Ascending aorta (tissue), 2 donors: ENCODE measurements at regions of chr4 and their contacts with region 1.

Region 1: GRCh38 chr4:53377319-53378170 is at the start of gene FIP1L1:
- DNase-seq: peak; percentile 78 to 97
- H3K4me3 ChIP-seq: peak within 1 kb of the TSS; percentile 66 to 78
- H3K27ac ChIP-seq: peak within 1 kb of the TSS; percentile 82 to 84
- H3K4me1 ChIP-seq: peaks cover 2 to 3% of the 10 kb centered on the region in 2 donors
- H3K27me3 ChIP-seq: no peaks in the 10 kb centered on the region
- CTCF ChIP-seq: no peak
- total RNA-seq, gene FIP1L1: 20.4 TPM

Region 2: DNA sequence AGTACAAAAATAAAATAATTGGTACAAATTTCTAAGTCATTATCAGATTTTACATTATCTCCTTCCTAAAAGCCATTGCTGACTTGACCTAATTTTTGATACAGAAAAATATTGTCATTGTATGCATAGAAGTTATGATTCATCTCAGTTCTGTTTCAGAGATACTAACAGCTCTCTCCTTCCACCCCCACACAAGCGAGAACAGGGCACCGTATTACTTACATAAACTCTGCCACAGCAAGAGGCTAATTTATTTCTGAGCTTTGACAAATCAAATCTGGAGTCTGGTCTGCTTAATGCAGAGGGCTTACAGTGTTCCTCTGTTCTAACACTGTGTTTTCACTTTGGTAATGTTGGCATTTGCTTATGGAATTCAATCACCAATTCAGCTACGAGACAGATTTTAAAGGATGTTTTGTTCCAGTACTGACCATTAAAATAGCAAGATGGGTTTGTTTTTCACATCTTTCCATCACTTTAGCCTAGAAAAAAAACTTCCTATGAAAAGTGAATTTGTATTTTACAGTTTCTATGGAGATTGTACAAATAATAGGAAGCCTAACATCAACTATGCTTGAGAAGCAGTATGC is 900.3 kb before region 1 on chr4:
- intact Hi-C with region 1: no loop called
- DNase-seq: no peak
- H3K4me3 ChIP-seq: no peak overlapping the region
- H3K27ac ChIP-seq: no peak overlapping the region
- H3K4me1 ChIP-seq: no peaks in the 10 kb centered on the region
- H3K27me3 ChIP-seq: no peaks in the 10 kb centered on the region
- CTCF ChIP-seq: no peak

Region 3: DNA sequence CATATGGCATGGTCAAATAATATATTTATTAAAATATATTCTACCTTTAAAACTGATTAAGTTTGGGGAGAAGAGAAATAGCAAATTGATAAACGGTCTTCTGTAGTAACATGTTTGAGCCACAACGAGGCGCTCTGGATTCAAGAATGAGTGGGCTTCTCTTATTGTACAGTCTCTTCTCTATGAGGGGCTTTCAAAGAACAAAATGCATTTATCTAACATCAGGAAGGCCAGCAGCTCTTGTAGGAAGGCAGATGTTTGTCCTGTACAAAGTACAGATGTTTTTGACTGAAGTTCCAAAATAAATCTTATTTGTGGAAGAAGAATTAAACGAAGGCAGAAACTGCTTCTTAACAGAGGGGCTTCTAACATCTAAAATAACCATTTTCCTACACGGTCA is 361.9 kb before region 1 on chr4:
- intact Hi-C with region 1: loop called (anchors 5 kb)
- DNase-seq: no peak
- H3K4me3 ChIP-seq: no peak overlapping the region
- H3K27ac ChIP-seq: peak overlapping the region in 1 of 2 donors; percentile 27
- H3K4me1 ChIP-seq: peaks cover 0 to 54% of the 10 kb centered on the region in 2 donors
- H3K27me3 ChIP-seq: no peaks in the 10 kb centered on the region
- CTCF ChIP-seq: peak; percentile 57 to 78 (median 76)

Region 4: GRCh38 chr4:53196882-53197771 is 180.4 kb before region 1 on chr4:
- intact Hi-C with region 1: loop called (anchors 5 kb)
- DNase-seq: no peak
- H3K4me3 ChIP-seq: peak overlapping the region in 1 of 2 donors; percentile 13
- H3K27ac ChIP-seq: no peak overlapping the region
- H3K4me1 ChIP-seq: no peaks in the 10 kb centered on the region
- H3K27me3 ChIP-seq: no peaks in the 10 kb centered on the region
- CTCF ChIP-seq: peak; percentile 66 to 77 (median 72)

Region 5: GRCh38 chr4:53321151-53321983 is 56.2 kb before region 1 on chr4:
- intact Hi-C with region 1: loop called (anchors 5 kb)
- DNase-seq: no peak
- H3K4me3 ChIP-seq: peak overlapping the region; percentile 14 to 23
- H3K27ac ChIP-seq: peak overlapping the region; percentile 81 to 87
- H3K4me1 ChIP-seq: peaks cover 4 to 15% of the 10 kb centered on the region in 2 donors
- H3K27me3 ChIP-seq: no peaks in the 10 kb centered on the region
- CTCF ChIP-seq: no peak

Region 6: GRCh38 chr4:53365486-53366300 is 11.9 kb before region 1 on chr4 and contains the start of gene SCFD2:
- intact Hi-C with region 1: loop called (anchors 1 kb)
- DNase-seq: peak; percentile 95 to 99
- H3K4me3 ChIP-seq: peak within 1 kb of the TSS; percentile 69 to 97
- H3K27ac ChIP-seq: peak within 1 kb of the TSS; percentile 30 to 53
- H3K4me1 ChIP-seq: peaks cover 4 to 25% of the 10 kb centered on the region in 2 donors
- H3K27me3 ChIP-seq: no peaks in the 10 kb centered on the region
- CTCF ChIP-seq: no peak
- total RNA-seq, gene SCFD2: 22.8 TPM

Region 7: GRCh38 chr4:54032558-54033135 is 655.1 kb after region 1 on chr4:
- intact Hi-C with region 1: no loop called
- DNase-seq: no peak
- H3K4me3 ChIP-seq: peak overlapping the region in 1 of 2 donors; percentile 7
- H3K27ac ChIP-seq: no peak overlapping the region
- H3K4me1 ChIP-seq: peaks cover 0 to 4% of the 10 kb centered on the region in 2 donors
- H3K27me3 ChIP-seq: no peaks in the 10 kb centered on the region
- CTCF ChIP-seq: no peak